AG04449 (cell line): ENCODE measurements at regions of chr3 and their contacts with region 1.

Region 1: GRCh38 chr3:51371943-51372557 is 13.0 kb upstream of the MANF start:
- DNase-seq: peak; percentile 29
- H3K4me3 ChIP-seq: no peak overlapping the region
- CTCF ChIP-seq: peak; percentile 70

Region 2: GRCh38 chr3:50350527-50351322 is 1021.3 kb before region 1 on chr3 and contains the starts of genes CYB561D2 and NPRL2:
- CTCF ChIA-PET with region 1: no interaction called
- POLR2A ChIA-PET with region 1: no interaction called
- DNase-seq: peak; percentile 55
- H3K4me3 ChIP-seq: peak within 1 kb of the TSS; percentile 99
- CTCF ChIP-seq: no peak

Region 3: DNA sequence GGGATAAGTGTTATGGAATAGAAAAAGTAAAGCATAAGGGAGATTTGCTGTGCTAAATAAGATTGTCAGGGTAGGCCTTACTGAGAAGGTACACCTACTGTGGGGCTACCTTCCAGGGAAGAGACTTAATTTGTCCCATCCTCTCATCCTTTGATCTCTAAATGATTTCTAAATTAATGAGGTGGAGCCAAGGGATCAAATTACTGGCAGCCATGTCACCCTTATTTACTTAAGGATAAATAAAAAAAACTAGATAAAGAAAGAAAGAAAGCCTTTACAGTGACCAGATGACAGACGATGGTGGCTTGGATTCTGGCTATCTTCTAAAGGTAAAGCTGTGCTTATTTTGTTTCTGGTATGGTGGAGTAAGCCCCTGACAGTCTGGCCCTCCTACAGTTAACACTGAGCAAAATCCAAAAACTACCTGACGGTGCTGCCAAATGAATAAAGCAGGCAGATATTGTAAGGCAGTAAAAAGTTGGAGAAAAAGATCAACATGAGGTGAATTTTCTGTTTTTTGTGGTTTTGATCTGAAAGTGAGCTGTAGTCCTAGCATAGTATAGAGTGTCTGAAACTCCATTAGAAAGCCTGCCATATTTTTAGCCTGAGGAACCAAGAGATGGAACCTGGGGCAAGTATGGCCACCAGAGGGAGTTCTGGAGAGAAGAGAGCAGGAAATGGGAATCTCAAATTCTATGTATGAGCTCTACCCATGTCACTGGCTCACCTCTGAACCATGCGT is 272.1 kb before region 1 on chr3:
- CTCF ChIA-PET with region 1: interaction called, 284 read pairs
- POLR2A ChIA-PET with region 1: no interaction called
- DNase-seq: peak; percentile 4
- H3K4me3 ChIP-seq: no peak overlapping the region
- CTCF ChIP-seq: peak; percentile 72

Region 4: GRCh38 chr3:51269466-51269865 is 102.6 kb before region 1 on chr3:
- CTCF ChIA-PET with region 1: interaction called, 29 read pairs
- POLR2A ChIA-PET with region 1: no interaction called
- DNase-seq: no peak
- H3K4me3 ChIP-seq: no peak overlapping the region
- CTCF ChIP-seq: peak; percentile 29

Region 5: GRCh38 chr3:51311055-51311454 is 61.0 kb before region 1 on chr3:
- CTCF ChIA-PET with region 1: interaction called, 12 read pairs
- POLR2A ChIA-PET with region 1: no interaction called
- DNase-seq: peak; percentile 7
- H3K4me3 ChIP-seq: no peak overlapping the region
- CTCF ChIP-seq: peak; percentile 32

Region 6: DNA sequence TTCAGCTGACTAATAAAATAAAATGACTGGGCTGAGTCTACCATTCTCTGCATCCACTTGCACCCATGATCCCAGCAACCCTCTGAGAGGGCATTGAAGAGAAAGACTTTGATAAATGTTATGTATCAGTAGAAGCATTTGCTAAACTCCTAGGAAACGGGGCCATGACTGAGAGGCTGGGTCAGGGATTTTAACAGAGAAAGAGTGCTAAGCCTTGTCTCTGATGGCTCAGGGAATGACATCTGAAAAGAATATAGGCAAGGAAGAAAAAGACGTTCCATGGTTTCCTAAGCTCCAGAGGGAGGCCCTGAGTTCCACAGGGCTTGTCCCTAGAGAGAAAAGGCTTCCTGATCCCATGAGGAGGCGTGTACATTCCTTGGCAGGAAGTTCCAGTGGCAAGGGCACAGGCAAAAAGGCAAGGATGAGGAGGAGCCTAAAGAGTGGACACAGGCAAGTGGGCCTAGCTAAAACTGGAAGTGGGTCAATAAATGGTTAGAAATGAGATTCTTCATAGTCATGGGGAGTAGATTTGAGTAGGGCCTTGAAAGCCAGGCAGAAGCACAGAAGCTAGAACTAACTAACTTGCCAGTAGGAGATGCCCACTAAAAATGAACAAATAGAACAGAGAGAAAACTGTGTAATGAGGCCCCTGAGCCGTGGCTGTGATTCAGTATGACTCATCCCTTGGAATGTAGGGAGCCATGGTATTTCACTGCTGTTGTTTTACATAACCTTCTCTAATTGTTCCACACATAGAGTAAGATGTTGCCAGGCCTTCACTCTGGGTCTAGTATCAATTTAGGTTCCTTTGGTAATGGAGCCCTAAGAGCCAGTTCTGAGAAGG is 31.8 kb before region 1 on chr3:
- CTCF ChIA-PET with region 1: interaction called, 12 read pairs
- POLR2A ChIA-PET with region 1: no interaction called
- DNase-seq: peak; percentile 75
- H3K4me3 ChIP-seq: no peak overlapping the region
- CTCF ChIP-seq: no peak

Region 7: DNA sequence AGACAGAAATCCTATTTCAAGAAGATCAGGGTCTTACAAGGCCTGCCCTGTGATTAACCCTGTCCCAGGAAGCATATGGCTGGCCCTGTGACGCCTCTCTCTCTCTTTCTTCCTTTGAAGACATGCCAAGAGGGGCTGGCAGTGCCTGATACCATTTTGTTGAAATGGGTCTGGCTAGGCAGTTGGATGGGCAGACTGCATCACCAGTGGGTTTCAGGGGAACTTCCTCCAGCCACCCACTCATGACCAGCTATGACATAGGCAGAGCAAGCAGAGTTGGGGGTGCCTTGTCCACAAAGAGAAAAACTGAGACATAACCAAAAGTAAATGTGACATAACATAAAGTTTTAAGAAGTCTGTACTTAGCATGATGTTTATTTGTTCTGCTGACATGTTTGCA is 18.4 kb before region 1 on chr3:
- CTCF ChIA-PET with region 1: interaction called, 25 read pairs
- POLR2A ChIA-PET with region 1: no interaction called
- DNase-seq: no peak
- H3K4me3 ChIP-seq: no peak overlapping the region
- CTCF ChIP-seq: no peak